Prostate gland (tissue), 2 donors: ENCODE measurements at regions of chr2 and their contacts with region 1.

Region 1: GRCh38 chr2:10448208-10448645 is at the start of gene ODC1:
- DNase-seq: peak; percentile 92
- H3K4me3 ChIP-seq: peak within 1 kb of the TSS; percentile 60 to 80
- H3K27ac ChIP-seq: peak within 1 kb of the TSS; percentile 88 to 93
- H3K4me1 ChIP-seq: peaks cover 3% of the 10 kb centered on the region
- H3K27me3 ChIP-seq: no peaks in the 10 kb centered on the region
- CTCF ChIP-seq: no peak
- POLR2A ChIP-seq: peak; percentile 41
- total RNA-seq, gene ODC1: 147 to 261 TPM

Region 2: GRCh38 chr2:10659898-10660568 is 211.8 kb after region 1 on chr2:
- intact Hi-C with region 1: loop called (anchors 10 kb)
- DNase-seq: peak; percentile 27
- H3K4me3 ChIP-seq: no peak overlapping the region
- H3K27ac ChIP-seq: no peak overlapping the region
- H3K4me1 ChIP-seq: no peaks in the 10 kb centered on the region
- H3K27me3 ChIP-seq: no peaks in the 10 kb centered on the region
- CTCF ChIP-seq: peak in 3 of 4 experiments; percentile 46 to 61 (median 59)
- POLR2A ChIP-seq: no peak